ENCODE measurements at regions of chr3 and their contacts with region 1.

Region 1: DNA sequence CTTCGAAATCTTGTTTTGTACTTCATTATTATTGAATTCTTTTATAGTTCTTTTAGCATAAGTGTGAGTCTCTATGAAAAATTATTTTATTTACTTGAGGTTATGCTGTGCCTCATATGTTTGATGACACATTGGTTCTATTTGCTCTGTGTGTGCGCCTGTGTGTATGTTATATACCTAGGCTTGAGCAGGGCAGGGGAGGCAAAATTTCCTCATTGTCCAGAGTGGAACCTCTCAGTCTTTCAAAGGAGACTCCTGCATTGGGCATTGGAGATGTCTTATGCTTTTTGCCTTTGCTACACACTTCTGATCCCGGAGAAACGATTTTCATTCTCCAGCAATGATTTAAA is 58.4 kb downstream of the ALCAM start:
- DNase-seq: no peak
- ATAC-seq: no peak
- H3K4me3 Mint-ChIP-seq: no peak overlapping the region
- H3K27ac Mint-ChIP-seq: no peak overlapping the region
- H3K4me1 Mint-ChIP-seq: peaks cover 20% of the 10 kb centered on the region
- H3K27me3 Mint-ChIP-seq: no peaks in the 10 kb centered on the region
- CTCF ChIP-seq: no peak

Region 2: GRCh38 chr3:105440113-105440512 is 15.0 kb after region 1 on chr3:
- CTCF ChIA-PET with region 1: no interaction called
- POLR2A ChIA-PET with region 1: no interaction called
- intact Hi-C with region 1: loop called (anchors 2 kb)
- DNase-seq: no peak
- ATAC-seq: no peak
- H3K4me3 Mint-ChIP-seq: no peak overlapping the region
- H3K27ac Mint-ChIP-seq: no peak overlapping the region
- H3K4me1 Mint-ChIP-seq: peaks cover 3% of the 10 kb centered on the region
- H3K27me3 Mint-ChIP-seq: no peaks in the 10 kb centered on the region
- CTCF ChIP-seq: no peak

Measured in activated B cell treated with CpG ODN at 0.5 μM for 24 hours (primary cell).